Activated CD8-positive, alpha-beta T cell treated with anti-CD3 and anti-CD28 coated beads, Interleukin-2, amount 10 ng/mL, durations not matched to agents 7 days and 5 days (primary cell): ENCODE measurements at regions of chr1 and their contacts with region 1.

Region 1: DNA sequence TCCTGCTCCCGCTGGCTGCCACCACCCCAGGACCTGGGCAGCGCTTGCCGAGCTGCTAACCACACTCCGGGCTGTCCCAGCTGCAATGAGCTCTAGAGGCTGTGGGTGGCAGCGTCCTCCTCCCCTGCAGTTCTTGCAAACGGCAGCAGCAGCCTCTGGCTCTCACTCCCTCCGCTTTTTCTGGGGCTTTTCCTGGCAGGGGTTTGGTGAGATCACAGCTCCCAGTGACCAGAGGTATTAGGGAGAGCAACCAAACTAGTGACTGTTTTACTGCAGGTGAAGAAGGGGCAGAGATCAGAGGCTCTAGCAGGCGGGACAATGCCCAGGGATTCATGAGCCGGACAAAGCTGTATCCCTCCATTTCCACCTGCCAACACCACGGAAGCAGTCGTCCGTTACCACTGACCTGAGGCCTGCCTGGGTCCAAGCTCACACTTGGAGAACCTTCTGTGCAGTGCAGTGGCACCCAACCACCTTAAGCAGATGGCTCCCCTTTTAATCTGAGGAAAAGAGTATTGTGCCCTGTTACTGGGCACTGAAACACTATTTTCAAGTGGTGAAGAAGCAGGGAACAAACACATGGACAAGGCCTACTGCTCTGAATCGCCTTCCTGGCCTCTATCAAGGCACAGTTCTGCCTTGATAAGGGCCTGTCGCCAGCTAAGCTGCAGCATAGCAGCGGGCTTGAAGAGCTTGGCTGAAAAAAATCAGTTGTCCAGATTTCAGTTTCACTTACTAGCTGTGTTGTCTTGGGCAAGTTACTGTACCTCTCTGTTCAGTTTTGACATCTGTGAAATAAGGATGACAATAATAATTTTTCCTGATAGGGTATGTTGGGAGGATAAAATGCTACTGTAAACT is at the start of gene F5:
- DNase-seq: peak; percentile 86
- ATAC-seq: peak; percentile 100
- H3K4me3 Mint-ChIP-seq: peak within 1 kb of the TSS; percentile 78
- H3K27ac Mint-ChIP-seq: peak within 1 kb of the TSS; percentile 83
- H3K4me1 Mint-ChIP-seq: peaks cover 51% of the 10 kb centered on the region
- H3K27me3 Mint-ChIP-seq: no peaks in the 10 kb centered on the region
- total RNA-seq, gene F5: 1.4 to 1.6 TPM

Region 2: GRCh38 chr1:169565335-169566271 is 21.0 kb before region 1 on chr1:
- CTCF ChIA-PET with region 1: interaction called, 10 read pairs
- POLR2A ChIA-PET with region 1: no interaction called
- DNase-seq: no peak
- ATAC-seq: no peak
- H3K4me3 Mint-ChIP-seq: no peak overlapping the region
- H3K27ac Mint-ChIP-seq: no peak overlapping the region
- H3K4me1 Mint-ChIP-seq: peaks cover 5% of the 10 kb centered on the region
- H3K27me3 Mint-ChIP-seq: no peaks in the 10 kb centered on the region

Region 3: DNA sequence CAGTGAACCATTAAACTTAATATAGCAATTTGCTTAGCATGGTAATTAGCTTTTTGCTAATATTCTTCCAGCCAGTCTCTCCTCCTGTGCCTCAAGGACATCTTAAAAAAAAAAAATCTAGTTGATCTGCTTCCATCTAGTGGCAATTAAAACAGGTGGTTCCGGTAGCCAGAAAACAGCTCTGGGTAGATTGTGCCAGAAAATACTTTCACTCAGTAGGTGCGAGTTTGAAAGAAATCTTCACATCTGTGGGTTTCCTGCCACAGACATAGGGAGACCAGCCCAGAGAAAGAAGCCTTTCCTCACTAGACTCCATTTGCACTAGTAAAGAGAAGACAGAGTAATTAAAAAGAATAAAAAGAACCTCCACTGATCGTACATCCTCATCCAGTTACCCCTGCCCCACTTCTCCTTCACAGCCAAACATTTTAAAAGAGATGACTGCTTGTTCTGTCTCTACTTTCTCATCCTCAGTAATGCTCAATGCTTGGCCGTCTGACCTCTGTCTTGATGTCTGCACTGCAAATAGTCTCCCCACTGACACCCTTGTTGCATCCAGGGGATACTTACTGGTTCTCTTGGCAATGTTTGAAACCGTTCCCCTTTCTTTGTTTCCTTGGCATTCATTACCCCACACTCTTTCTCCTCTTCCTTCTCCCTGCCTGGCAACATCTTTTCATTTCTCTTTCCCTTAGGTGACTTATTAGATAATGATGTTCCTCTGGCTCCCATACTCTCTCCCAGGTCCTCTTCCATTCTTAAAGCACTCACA is 107.9 kb after region 1 on chr1:
- CTCF ChIA-PET with region 1: interaction called, 55 read pairs
- POLR2A ChIA-PET with region 1: interaction called, 5 read pairs
- DNase-seq: peak; percentile 72
- ATAC-seq: peak; percentile 73
- H3K4me3 Mint-ChIP-seq: peak overlapping the region; percentile 27
- H3K27ac Mint-ChIP-seq: peak overlapping the region; percentile 87
- H3K4me1 Mint-ChIP-seq: peaks cover 94% of the 10 kb centered on the region
- H3K27me3 Mint-ChIP-seq: no peaks in the 10 kb centered on the region

Region 4: GRCh38 chr1:169701261-169702005 is 114.8 kb after region 1 on chr1:
- CTCF ChIA-PET with region 1: interaction called, 21 read pairs
- POLR2A ChIA-PET with region 1: interaction called, 5 read pairs
- DNase-seq: no peak
- ATAC-seq: no peak
- H3K4me3 Mint-ChIP-seq: peak overlapping the region; percentile 30
- H3K27ac Mint-ChIP-seq: peak overlapping the region; percentile 71
- H3K4me1 Mint-ChIP-seq: peaks cover 95% of the 10 kb centered on the region
- H3K27me3 Mint-ChIP-seq: no peaks in the 10 kb centered on the region

Region 5: DNA sequence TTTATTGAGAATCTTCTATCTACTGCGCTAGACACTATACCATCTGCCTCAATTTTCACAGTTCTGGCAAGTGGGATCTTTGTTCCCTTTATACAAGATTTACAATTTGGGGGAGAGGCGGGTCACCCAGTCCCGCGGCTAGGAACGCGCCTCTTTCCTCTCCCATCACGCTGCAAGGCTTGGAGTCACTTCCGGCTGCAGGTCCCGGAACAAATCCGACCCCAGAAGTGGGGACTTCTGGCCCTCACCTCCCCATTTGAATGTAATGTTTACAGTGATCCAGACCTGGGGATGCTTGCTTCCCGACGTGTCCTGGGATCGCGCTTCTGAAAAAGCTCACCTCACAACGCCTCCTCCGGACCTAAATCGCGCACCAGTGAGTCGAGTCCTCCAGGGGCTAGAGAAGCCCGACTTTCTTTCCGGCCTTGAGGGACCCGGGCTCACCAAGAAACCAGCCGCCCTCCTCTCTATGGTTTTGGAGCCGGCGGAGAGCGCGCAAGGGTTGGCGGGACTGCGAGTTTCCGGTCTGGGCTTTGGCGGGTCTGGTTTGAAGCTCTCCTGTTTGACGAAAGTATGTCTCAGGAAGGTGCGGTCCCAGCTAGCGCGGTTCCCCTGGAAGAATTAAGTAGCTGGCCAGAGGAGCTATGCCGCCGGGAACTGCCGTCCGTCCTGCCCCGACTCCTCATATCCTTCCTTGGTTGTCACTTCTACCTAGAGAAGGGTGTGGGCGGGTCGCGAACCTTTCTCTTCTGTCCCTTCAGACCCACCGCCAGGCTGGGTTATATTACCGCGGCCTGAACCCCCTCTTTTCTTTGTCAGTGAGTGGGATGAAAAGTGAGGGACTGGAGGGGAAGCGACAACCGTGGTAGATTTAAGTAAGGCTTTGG is 208.1 kb after region 1 on chr1 and contains the start of gene METTL18:
- CTCF ChIA-PET with region 1: interaction called, 19 read pairs
- POLR2A ChIA-PET with region 1: interaction called, 3 read pairs
- DNase-seq: peak; percentile 96
- ATAC-seq: peak; percentile 96
- H3K4me3 Mint-ChIP-seq: peak within 1 kb of the TSS; percentile 80
- H3K27ac Mint-ChIP-seq: peak within 1 kb of the TSS; percentile 85
- H3K4me1 Mint-ChIP-seq: peaks cover 54% of the 10 kb centered on the region
- H3K27me3 Mint-ChIP-seq: no peaks in the 10 kb centered on the region
- total RNA-seq, gene METTL18: 9.8 to 10.2 TPM

Region 6: GRCh38 chr1:169809370-169810095 is 222.9 kb after region 1 on chr1:
- CTCF ChIA-PET with region 1: interaction called, 30 read pairs
- POLR2A ChIA-PET with region 1: interaction called, 3 read pairs
- DNase-seq: peak; percentile 28
- ATAC-seq: no peak
- H3K4me3 Mint-ChIP-seq: no peak overlapping the region
- H3K27ac Mint-ChIP-seq: no peak overlapping the region
- H3K4me1 Mint-ChIP-seq: peaks cover 8% of the 10 kb centered on the region
- H3K27me3 Mint-ChIP-seq: no peaks in the 10 kb centered on the region